ENCODE measurements at regions of chr18 and their contacts with region 1.

Region 1: DNA sequence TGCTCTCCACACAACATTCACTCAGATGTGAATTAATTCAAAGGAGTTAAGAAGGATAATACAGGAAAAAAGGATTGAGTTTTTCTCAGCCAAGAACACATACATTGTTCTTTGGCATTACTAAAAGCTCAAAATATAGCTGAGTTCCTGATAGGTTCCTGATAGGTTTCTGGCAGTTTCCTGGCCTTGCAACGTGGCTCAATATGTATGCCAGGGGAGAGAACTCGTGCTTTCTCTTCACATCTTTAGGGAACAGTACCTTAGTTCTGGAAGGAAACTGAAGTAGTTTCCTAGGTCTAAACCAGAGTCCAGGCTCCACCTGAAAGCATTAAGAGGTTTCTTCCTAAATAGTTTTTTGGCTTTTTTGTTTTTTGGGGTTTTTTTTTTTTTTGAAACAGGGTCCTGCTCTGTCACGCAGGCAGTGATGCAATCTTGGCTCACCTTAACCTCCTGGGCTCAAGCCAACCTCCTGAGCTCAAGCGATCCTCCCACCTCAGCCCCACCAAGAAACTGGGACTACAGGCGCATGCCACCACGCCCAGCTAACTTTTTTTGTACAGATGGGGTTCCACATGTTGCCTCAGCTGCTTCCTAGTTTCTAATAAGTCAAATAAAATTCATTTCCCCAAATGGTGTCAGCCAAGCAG is 42.8 kb downstream of the ESCO1 start:
- DNase-seq: no peak

Region 2: DNA sequence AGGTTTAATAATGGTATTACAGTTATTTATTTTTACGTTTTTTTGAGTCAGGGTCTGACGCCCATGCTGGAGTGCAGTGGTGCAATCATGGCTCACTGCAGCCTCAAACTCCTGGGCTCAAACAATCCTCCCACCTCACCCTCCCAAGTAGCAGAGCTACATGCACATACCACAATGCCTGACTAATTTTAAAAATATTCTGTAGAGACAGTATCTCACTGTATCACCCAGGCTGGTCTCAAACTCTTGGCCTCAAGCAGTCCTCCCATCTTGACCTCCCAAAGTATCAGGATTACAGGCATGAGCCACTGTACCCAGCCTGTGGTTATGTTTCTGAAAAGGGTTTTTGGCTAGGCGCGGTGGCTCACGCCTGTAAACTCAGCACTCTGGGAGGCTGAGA is 78.0 kb before region 1 on chr18:
- intact Hi-C with region 1: no loop called
- DNase-seq: peak in 1 of 42 donors; percentile 18

Region 3: DNA sequence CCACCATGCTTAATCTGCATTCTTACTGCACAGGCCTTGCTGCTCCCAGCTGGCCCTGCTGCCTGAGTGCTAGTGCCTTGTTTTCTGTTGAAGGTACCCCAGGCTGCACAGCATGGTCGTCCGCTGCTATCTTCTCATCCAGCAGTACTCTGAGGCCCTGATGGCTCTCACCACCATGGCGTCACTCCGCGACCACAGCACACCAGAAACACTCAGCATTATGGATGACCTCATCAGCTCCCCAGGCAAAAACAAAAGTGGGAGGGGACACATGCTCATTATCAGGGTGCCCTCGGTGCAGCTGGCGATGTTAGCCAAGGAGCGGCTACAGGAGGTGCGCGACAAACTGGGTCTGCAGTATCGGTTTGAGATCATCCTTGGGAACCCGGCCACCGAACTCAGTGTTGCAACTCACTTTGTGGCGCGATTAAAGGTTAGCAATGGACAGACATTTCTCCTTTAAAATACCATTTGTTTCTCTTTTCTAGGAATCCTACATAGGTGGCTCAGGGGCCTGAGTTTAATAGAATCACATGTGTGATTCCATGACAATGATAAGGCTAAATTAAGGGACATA is 67.7 kb before region 1 on chr18:
- intact Hi-C with region 1: loop called (anchors 10 kb)
- DNase-seq: no peak

Region 4: DNA sequence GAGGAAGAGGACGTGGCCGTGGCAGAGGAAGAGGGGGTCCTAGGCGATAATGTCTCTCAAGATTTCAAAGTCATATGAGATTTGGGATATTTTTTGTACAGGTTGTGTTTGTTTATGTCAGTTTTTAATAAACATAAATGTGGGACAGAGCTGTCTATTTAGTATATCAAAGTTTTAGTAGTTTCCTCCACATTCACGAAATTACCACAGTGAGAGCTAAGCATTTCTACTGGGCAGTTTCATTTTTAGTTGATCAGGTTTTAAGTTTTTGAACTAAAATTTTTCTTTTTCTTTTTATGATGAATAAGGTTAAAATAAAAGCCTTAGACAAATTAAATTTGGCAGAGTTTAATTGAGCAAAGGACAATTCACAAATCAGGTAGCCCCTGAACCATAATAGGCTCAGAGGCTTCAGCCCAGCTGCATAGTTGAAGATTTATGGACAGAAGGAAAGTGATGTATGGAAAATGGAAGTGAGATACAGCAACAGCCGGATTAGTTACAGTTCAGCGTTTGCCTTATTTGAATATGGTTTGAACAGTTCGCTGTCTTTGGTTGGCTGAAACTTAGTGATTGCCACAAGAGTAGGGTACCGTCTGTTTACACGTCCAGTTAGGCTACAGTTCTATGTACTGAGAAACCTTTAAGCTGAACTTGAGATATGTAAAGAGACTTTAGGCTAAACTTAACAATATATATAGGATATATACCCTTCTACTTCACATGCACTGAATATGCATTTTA is 71.5 kb after region 1 on chr18:
- intact Hi-C with region 1: no loop called
- DNase-seq: no peak